ENCODE measurements at regions of chr20 and their contacts with region 1.

Region 1: DNA sequence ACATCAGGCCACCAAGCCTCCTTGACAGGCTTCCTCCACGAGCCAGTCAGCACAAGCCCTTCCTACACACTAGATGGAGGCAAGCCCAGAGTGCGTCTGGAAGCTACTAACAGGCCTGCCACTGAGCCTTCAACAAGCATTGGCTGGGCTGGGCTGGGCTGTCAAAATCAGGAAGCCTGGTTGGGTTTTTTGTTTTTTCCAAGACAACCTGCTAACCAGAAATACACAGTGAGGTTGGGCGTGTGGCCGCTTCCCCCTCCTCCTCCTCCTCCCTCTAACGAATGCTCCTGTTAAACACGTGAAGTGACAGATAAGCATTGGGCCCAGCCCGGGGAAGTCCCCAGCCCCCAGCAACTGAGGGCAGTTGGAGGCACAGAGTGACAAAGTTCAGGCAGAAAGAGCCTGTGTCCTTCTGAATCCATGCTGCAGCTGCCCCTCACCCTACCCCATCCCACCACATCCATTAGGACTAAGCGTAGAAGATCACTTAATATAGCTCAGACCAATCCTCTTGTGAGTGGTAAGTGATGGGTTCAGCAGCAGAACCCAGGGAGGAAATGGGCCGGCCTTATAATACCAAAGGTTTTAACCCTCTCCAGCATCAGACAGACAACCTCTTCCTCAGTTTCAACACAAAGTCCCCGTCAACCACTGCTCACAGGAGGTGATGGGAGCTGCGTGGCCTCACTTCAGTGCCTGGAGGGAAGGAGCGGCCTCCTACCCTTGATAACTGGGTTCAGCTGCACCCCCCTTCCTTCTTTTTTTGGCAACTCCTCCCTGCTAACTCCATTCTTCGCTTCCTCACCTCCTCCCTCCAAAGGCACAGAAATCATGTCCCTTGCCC is 1.1 kb downstream of the NFATC2 start:
- DNase-seq: peak; percentile 64 to 92 (median 76)
- ATAC-seq: peak; percentile 88
- H3K4me3 ChIP-seq: peak overlapping the region; percentile 72
- H3K27ac ChIP-seq: peak overlapping the region; percentile 76
- H3K4me1 ChIP-seq: peaks cover 26 to 33% of the 10 kb centered on the region in 2 experiments; a peak in 4 of 5 replicates
- H3K27me3 ChIP-seq: peaks cover 1 to 11% of the 10 kb centered on the region in 2 experiments; a peak in 4 of 5 replicates
- CTCF ChIP-seq: no peak
- EP300 ChIP-seq: peak; percentile 78
- POLR2A ChIP-seq: peak; percentile 58; the same call in 1 of the 2 replicates
- RAD21 ChIP-seq: 0 out of 4 replicates have a peak, but pooled peaks of 1 of the 2 experiments have one; percentile 13

Region 2: DNA sequence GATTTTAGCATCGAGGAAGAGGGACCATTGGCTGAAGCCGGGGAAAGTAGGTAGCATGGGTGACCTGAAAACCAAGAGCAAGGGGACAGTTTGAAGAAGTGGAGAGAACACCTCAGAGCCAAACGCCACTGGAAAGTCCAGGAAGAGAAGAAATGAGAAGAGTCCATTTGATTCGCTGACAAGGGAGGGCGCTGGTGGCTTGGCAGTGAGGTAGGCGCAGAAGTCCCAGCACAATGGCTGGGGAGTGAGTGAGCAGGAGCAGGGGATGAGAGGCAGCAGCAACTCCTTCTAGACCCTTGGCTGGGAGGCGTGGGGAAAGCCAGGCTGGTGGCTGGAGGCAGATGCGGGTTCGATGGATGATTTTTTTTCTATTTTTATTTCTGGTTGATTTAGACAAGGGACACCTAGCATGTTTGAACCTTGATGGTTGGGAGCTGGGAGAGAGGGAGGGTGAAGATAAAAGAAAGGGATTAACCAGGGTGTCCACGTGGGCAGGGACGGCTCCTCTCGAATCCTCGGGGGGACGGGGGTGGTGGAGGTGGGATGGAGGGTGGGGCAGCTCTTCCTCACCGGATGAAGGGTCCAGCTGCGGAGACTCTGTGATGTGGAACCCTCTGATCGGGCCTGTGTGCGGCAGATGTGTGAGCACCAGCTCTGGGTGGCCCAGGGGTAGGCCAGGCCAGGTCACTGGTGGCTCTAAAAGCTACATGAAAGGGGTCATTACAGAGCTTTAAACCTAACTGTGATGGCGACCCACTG is 163.1 kb before region 1 on chr20:
- CTCF ChIA-PET with region 1: no interaction called
- POLR2A ChIA-PET with region 1: no interaction called
- in situ Hi-C with region 1: no loop called
- intact Hi-C with region 1: loop called (anchors 2 kb)
- DNase-seq: peak in 2 of 4 experiments; percentile 46 to 53
- ATAC-seq: peak; percentile 29; the same call in 2 of the 3 replicates
- H3K4me3 ChIP-seq: no peak overlapping the region
- H3K27ac ChIP-seq: no peak overlapping the region
- H3K4me1 ChIP-seq: peaks cover 41 to 61% of the 10 kb centered on the region in 2 experiments
- H3K27me3 ChIP-seq: no peaks in the 10 kb centered on the region
- CTCF ChIP-seq: peak; percentile 37 to 59 (median 57); a peak in 4 of 6 replicates
- EP300 ChIP-seq: no peak
- POLR2A ChIP-seq: no peak
- RAD21 ChIP-seq: peak; percentile 41 to 78

Region 3: DNA sequence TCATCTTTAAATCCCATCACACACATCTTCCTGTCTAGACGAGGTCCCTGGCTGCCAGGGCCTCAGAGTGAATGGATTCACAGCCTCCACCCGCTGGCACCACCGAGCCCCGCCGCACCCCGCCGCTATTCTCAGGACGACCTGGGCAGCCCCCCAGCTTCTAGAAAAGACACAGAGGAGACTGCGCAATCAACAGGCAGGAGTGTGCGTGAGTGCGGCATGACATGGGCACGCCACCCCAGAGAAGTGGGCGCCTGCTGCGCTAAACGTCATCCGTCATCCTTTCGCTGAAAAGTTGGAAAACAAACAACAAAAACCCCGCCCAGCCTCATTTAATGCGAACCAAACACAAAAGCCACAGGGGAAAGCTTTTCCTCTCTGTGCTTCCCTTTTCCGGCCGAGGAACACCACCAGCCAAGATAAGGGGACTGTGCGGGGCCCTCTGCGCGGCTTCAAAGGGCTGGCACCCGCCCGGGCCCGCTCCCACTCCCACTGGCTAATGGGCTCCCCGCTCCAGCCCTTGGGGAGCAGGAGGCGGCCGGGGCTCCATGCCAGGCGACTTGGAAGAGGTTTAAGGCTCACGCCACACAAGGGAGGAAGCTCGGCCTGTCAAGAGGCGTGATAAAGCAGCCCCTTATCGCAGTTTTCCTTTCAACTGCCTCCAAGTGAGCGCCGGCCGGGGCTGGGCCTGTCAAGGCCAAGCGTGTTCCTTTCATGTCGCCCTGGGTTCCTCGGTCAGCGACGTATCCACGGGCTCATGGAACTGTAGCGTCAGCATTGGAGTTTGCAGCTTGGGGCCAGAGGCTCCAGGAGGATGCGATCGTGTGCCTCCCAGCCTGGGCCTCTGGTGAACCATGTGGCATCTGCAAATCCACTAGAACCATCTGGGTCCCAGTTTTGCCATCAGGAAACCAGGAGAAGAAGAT is 49.0 kb before region 1 on chr20:
- CTCF ChIA-PET with region 1: no interaction called
- POLR2A ChIA-PET with region 1: interaction called, 3 read pairs
- in situ Hi-C with region 1: no loop called
- intact Hi-C with region 1: loop called (anchors 2 kb)
- DNase-seq: peak; percentile 82 to 93 (median 86)
- ATAC-seq: peak; percentile 96
- H3K4me3 ChIP-seq: peak overlapping the region; percentile 34
- H3K27ac ChIP-seq: peak overlapping the region; percentile 94
- H3K4me1 ChIP-seq: peaks cover 36 to 40% of the 10 kb centered on the region in 2 experiments
- H3K27me3 ChIP-seq: no peaks in the 10 kb centered on the region
- CTCF ChIP-seq: no peak
- EP300 ChIP-seq: peak; percentile 80
- POLR2A ChIP-seq: peak; percentile 70
- RAD21 ChIP-seq: peak in 1 of 2 experiments; percentile 14; a peak in 1 of 4 replicates

Measured in K562 (cell line).